GM10248 (cell line): ENCODE measurements at regions of chr15 and their contacts with region 1.

Region 1: DNA sequence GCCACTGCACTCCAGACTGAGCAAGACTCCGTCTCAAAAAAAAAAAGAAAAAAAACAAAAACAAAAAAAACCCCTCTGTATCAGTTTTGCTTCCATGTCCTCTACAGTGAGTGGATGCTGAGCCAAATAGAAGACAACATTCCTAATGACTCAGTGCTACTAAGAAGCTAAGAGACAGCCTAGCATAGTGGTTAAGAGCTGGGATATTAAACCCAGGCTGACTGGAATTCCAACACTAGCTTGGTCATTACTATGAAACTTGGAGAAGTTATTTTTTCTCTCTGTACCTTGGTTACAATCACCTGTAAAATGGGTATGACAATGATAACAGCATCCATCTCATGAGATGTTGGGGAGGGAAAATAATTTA is 60.9 kb upstream of the PYGO1 start:
- DNase-seq: no peak
- CTCF ChIP-seq: no peak

Region 2: GRCh38 chr15:55637086-55637485 is 12.0 kb before region 1 on chr15:
- CTCF ChIA-PET with region 1: interaction called, 11 read pairs
- POLR2A ChIA-PET with region 1: no interaction called
- DNase-seq: no peak
- CTCF ChIP-seq: no peak

Region 3: GRCh38 chr15:55799291-55800212 is 150.5 kb after region 1 on chr15:
- CTCF ChIA-PET with region 1: interaction called, 53 read pairs
- POLR2A ChIA-PET with region 1: no interaction called
- DNase-seq: peak; percentile 54
- CTCF ChIP-seq: peak; percentile 60

Region 4: DNA sequence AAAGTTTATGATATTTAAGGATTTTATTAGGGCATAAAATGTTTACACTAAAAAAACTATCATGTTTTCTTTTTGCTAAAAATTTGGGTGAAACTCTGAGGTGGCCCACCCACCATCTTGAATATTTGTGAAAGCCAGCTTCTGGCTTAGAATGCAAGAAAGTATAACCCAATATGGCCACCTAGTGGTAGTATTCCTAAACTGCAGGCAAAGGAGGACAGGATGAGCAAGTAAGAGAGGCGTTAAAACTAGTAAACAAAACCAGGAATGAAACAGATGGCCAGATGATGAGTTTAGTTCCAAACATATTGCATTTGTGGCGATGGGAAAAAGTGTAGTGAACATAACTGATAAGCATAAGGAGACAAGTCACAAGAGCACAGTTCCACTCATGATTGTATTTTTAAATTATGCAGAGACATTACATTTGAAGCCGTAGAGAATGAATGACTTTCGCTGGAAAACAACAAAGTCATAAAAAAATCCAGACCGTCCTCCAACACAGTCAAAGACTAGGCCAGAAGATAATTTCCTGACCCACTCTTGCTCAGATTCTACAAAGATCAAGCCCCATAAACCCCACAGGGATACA is 197.2 kb after region 1 on chr15:
- CTCF ChIA-PET with region 1: interaction called, 32 read pairs
- POLR2A ChIA-PET with region 1: no interaction called
- DNase-seq: peak; percentile 68
- CTCF ChIP-seq: peak; percentile 87